Psoas muscle (tissue), 8 donors: ENCODE measurements at regions of chr11 and their contacts with region 1.

Region 1: GRCh38 chr11:17389211-17389956 is 925 bp upstream of the KCNJ11 start:
- DNase-seq: peak; percentile 87 to 95
- ATAC-seq: peak; percentile 62 to 77 (median 66)
- H3K4me3 ChIP-seq: peak overlapping the region; percentile 78
- H3K27ac ChIP-seq: peak overlapping the region; percentile 96
- H3K4me1 ChIP-seq: peaks cover 22% of the 10 kb centered on the region
- H3K27me3 ChIP-seq: no peaks in the 10 kb centered on the region
- CTCF ChIP-seq: peak; percentile 73

Region 2: DNA sequence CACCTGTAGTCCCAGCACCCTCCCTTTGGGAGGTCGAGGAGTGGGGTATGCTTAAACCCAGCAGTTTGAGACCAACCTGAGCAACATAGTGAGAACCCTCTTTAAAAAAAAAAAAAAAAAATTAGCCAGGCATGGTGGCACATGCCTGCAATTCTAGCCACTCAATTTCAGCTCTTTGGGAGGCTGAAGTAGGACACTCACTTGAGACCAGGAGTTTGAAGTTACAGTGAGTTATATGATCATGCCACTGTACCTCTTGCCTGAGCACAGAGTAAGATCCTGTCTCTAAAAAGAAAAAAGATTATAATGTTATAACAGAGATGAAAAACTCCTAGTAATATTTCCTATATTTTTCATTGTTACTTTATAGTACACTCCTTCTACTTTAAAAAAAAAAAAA is 205.5 kb before region 1 on chr11:
- intact Hi-C with region 1: no loop called
- DNase-seq: no peak
- ATAC-seq: no peak
- H3K4me3 ChIP-seq: no peak overlapping the region
- H3K27ac ChIP-seq: no peak overlapping the region
- H3K4me1 ChIP-seq: peaks cover 16% of the 10 kb centered on the region
- H3K27me3 ChIP-seq: no peaks in the 10 kb centered on the region
- CTCF ChIP-seq: no peak

Region 3: GRCh38 chr11:17405232-17406005 is 16.0 kb after region 1 on chr11:
- intact Hi-C with region 1: loop called in 1 of 2 experiments (anchors 2 kb)
- DNase-seq: peak; percentile 85 to 95
- ATAC-seq: peak; percentile 90 to 95 (median 93)
- H3K4me3 ChIP-seq: peak overlapping the region; percentile 28
- H3K27ac ChIP-seq: peak overlapping the region; percentile 88
- H3K4me1 ChIP-seq: peaks cover 46% of the 10 kb centered on the region
- H3K27me3 ChIP-seq: no peaks in the 10 kb centered on the region
- CTCF ChIP-seq: peak; percentile 46